T-cell (primary cell): ENCODE measurements at regions of chr13 and their contacts with region 1.

Region 1: GRCh38 chr13:94567581-94567980 is 28.4 kb downstream of the TGDS start:
- DNase-seq: no peak
- ATAC-seq: no peak
- H3K4me3 ChIP-seq: no peak overlapping the region
- H3K4me3 Mint-ChIP-seq: no peak overlapping the region
- H3K27ac ChIP-seq: no peak overlapping the region
- H3K27ac Mint-ChIP-seq: no peak overlapping the region
- H3K4me1 ChIP-seq: no peaks in the 10 kb centered on the region
- H3K4me1 Mint-ChIP-seq: no peaks in the 10 kb centered on the region
- H3K27me3 ChIP-seq: no peaks in the 10 kb centered on the region
- H3K27me3 Mint-ChIP-seq: no peaks in the 10 kb centered on the region

Region 2: DNA sequence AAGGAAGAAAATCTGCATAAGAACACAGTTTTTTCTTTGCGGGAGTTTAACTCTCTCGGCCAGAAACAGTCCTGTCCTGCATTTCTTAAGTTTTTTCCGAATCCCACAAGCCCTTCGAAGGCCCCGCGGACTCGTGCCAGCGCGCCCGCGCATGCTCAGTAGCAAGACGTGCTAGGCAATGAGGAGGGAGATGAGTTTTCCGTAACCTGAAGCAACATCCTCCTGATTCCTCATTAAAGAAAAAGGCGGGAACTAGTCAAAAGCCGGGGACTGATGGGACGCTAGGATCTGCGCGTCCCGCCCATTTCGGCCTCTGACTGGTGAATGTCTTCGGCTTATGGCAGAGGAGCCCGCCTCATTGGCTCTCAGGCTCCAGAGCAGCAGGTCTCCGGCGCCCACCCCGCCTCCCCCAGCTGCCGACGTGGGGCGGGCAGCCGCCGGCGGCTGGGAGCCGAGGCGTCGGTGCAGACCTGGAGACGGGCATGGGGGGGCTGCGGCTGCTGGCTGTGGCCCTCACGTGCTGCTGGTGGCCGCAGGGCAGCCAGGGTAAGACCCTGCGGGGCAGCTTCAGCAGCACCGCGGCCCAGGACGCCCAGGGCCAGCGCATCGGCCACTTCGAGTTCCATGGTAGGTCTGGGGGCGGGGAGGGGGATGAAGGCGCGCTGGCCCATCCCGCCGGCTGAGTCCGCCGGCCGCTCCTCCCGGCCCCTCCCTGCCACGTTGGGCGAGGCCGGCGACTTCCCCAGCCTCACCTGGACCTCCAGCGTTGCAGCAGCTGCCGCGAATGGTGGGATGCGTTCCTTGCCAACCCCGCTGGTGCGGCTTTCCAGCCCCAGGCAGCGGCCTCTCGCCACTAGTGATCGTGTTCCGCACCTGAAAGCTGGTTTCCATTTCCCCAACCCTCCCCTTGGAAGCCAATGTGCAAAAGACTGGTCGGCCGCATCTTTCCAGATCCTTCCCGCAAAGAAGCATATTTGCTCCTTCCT is 34.2 kb after region 1 on chr13 and contains the start of gene GPR180:
- CTCF ChIA-PET with region 1: no interaction called
- POLR2A ChIA-PET with region 1: interaction called in 1 of 2 experiments, 10 read pairs
- DNase-seq: peak; percentile 71 to 94 (median 83)
- ATAC-seq: peak; percentile 98 to 99 (median 99)
- H3K4me3 ChIP-seq: peak within 1 kb of the TSS; percentile 55 to 85
- H3K4me3 Mint-ChIP-seq: peak within 1 kb of the TSS; percentile 77 to 82 (median 79)
- H3K27ac ChIP-seq: peak within 1 kb of the TSS; percentile 35
- H3K27ac Mint-ChIP-seq: peak within 1 kb of the TSS; percentile 79 to 93
- H3K4me1 ChIP-seq: peaks cover 7 to 8% of the 10 kb centered on the region in 2 experiments
- H3K4me1 Mint-ChIP-seq: peaks cover 27 to 34% (median 27%) of the 10 kb centered on the region in 3 donors
- H3K27me3 ChIP-seq: no peaks in the 10 kb centered on the region
- H3K27me3 Mint-ChIP-seq: no peaks in the 10 kb centered on the region
- total RNA-seq, gene GPR180: 2.0 to 4.0 (median 3.4) TPM